Cardiac septum (tissue), 1 donor: ENCODE measurements at regions of chr3 and their contacts with region 1.

Region 1: DNA sequence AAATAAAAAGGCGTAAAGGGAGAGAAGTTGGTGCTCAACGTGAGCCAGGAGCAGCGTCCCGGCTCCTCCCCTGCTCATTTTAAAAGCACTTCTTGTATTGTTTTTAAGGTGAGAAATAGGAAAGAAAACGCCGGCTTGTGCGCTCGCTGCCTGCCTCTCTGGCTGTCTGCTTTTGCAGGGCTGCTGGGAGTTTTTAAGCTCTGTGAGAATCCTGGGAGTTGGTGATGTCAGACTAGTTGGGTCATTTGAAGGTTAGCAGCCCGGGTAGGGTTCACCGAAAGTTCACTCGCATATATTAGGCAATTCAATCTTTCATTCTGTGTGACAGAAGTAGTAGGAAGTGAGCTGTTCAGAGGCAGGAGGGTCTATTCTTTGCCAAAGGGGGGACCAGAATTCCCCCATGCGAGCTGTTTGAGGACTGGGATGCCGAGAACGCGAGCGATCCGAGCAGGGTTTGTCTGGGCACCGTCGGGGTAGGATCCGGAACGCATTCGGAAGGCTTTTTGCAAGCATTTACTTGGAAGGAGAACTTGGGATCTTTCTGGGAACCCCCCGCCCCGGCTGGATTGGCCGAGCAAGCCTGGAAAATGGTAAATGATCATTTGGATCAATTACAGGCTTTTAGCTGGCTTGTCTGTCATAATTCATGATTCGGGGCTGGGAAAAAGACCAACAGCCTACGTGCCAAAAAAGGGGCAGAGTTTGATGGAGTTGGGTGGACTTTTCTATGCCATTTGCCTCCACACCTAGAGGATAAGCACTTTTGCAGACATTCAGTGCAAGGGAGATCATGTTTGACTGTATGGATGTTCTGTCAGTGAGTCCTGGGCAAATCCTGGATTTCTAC is at the start of gene RARB:
- DNase-seq: peak; percentile 84
- total RNA-seq, gene RARB: 20.3 TPM

Region 2: GRCh38 chr3:24773798-24774197 is 654.4 kb before region 1 on chr3:
- intact Hi-C with region 1: loop called (anchors 10 kb)
- DNase-seq: no peak

Region 3: GRCh38 chr3:25044762-25045710 is 383.1 kb before region 1 on chr3:
- intact Hi-C with region 1: loop called (anchors 2 kb)
- DNase-seq: no peak

Region 4: DNA sequence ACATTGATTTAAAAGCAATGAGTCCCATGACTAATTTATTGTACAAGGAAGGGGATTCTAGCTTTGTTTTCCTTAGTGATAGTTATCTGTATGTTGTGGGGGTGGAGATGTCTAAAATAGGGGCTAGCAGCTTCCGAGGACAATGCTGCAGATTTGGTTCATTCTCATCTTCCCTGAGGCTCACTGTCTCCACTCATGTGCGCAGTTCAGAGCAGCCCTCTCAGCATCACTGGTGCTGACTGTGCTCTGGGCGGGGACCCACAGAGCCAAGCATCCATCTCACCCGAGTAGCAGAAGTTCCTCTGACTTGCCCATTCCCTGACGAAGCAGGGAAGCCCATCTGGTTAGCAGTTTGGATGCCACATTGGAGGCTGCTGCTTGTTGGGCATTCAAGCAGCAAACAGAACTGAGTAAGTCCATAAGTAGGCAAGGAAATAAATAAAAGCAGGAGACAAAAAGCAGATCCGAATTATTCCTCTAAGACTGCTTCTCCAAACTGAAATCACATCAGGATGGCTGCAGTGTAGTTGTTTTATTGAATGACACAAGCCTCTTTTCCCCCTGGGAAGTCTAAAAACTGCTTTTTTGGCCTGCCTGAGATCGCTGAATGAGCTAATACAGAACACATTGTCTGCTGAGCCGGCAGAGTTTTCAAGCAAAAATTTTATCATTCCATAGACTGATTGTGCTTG is 27.4 kb after region 1 on chr3:
- intact Hi-C with region 1: loop called (anchors 2 kb)
- DNase-seq: no peak

Region 5: GRCh38 chr3:25594007-25594502 is 165.9 kb after region 1 on chr3:
- intact Hi-C with region 1: loop called (anchors 1 kb)
- DNase-seq: no peak

Region 6: GRCh38 chr3:27105904-27106303 is 1677.7 kb after region 1 on chr3:
- intact Hi-C with region 1: no loop called
- DNase-seq: no peak